ENCODE measurements at regions of chr14 and their contacts with region 1.

Region 1: DNA sequence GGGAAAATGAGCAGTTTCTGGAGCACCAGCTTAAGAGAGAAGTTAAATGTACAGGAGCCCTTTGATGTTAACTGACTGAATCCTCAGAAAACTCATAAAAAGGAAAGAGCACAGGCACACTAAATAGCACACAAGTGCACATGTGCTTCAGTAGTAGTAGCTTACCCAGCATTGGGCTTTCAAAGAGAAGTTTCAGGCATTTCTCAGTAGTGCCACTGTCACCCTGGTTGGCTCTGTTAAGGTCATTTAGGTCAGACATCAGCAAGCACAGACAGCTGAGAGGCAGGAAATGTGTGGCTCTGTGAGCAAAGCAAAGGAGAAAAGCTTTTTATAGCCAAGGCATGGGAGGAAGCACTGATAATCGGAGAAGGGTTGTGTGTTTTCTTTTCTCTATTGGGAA is 96.3 kb upstream of the HIF1A start:
- DNase-seq: no peak
- H3K4me3 ChIP-seq: no peak overlapping the region
- H3K4me3 Mint-ChIP-seq: no peak overlapping the region
- H3K27ac ChIP-seq: no peak overlapping the region
- H3K27ac Mint-ChIP-seq: peak overlapping the region in 5 of 7 donors; percentile 53 to 89 (median 84)
- H3K4me1 ChIP-seq: peaks cover 43 to 57% of the 10 kb centered on the region in 2 donors
- H3K4me1 Mint-ChIP-seq: peaks cover 51% of the 10 kb centered on the region
- H3K27me3 ChIP-seq: no peaks in the 10 kb centered on the region
- H3K27me3 Mint-ChIP-seq: peaks cover 0 to 2% (median 0%) of the 10 kb centered on the region in 3 donors
- CTCF ChIP-seq: no peak

Region 2: DNA sequence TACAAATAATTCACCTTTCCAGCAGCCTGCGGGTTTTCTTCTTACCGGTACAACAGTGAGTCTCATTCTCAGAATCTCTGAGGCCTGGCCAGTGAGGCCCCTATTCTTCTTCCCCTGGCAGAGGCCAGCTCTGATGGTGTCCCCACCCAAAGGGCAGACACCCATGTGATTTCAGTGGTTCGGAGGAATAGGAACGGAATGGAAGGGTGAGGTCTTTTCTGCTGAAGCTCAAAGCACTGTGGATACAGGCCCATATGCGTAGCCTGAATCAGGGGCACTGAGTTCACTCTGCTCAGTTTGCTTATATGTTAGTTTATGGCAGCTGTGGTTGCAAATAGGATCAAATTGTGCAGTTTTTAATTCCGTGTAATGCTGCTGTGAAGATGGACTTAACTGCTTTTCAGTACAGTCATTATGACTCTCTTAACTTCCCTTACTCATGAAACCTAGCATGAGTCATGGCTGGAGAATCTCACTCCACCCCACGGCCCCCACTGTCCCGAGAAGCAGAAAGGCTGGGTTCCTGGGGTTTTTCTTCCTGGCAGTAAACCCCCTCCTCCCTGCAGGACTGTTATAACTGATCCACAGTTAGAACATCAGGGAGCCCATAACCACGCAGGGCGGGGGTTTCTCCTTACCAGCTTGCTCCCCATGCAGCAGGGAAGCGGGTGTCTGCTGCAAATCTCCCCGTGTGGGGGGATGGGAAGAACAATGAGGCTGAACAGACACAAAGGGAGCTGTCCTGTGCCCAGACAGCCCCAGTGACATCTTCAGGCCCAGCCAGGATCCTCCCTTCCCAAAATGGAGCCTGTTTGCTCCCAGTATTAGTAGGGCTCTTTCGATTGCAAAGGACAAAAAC is 495.3 kb before region 1 on chr14:
- intact Hi-C with region 1: loop called in 1 of 2 experiments (anchors 10 kb)
- DNase-seq: peak; percentile 89 to 97 (median 93)
- H3K4me3 ChIP-seq: peak overlapping the region in 2 of 3 experiments; percentile 9 to 49
- H3K4me3 Mint-ChIP-seq: peak overlapping the region; percentile 55 to 82
- H3K27ac ChIP-seq: peak overlapping the region; percentile 89 to 98
- H3K27ac Mint-ChIP-seq: peak overlapping the region; percentile 98 to 100 (median 99)
- H3K4me1 ChIP-seq: peaks cover 57 to 59% of the 10 kb centered on the region in 2 donors
- H3K4me1 Mint-ChIP-seq: peaks cover 58% of the 10 kb centered on the region
- H3K27me3 ChIP-seq: no peaks in the 10 kb centered on the region
- H3K27me3 Mint-ChIP-seq: no peaks in the 10 kb centered on the region
- CTCF ChIP-seq: no peak

Region 3: DNA sequence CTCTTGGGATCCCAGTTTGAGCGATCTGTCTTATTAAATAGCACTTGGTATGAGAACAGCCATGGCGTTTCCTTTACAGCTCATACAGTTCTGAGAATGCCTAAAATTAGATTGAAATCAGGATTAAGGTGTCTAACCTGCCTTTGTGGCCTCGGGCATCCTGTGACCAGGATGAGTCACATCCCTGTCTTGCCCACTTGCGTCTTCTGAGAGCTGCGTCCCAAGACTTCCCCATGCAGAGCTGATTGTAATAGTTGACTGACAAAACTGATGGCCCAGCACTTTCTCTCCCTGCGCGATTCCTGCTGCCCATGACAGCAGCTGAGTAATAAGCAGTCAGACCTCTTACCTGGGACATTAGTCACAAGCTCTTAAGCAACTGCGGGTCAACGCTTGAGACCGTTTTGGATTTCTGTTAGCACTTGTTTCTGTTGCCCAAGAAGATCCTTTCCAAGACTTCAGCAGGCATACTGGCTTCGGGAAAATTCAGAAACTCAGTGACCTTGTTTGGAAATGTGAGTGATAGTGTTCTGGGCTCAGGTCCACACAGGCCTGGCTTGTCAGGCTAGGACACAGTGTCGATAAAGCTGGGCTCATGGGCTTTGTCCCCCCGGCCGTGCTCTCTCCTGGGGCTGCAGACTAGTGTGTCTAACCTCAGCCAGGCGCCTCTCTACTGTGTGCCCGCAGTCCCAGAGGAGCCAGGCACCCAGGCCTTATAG is 73.5 kb before region 1 on chr14:
- intact Hi-C with region 1: loop called in 1 of 2 experiments (anchors 2 kb)
- DNase-seq: peak; percentile 93 to 98 (median 94)
- H3K4me3 ChIP-seq: no peak overlapping the region
- H3K4me3 Mint-ChIP-seq: peak overlapping the region in 1 of 2 donors; percentile 36
- H3K27ac ChIP-seq: peak overlapping the region; percentile 22 to 56
- H3K27ac Mint-ChIP-seq: peak overlapping the region in 6 of 7 donors; percentile 70 to 92 (median 88)
- H3K4me1 ChIP-seq: peaks cover 12 to 15% of the 10 kb centered on the region in 2 donors
- H3K4me1 Mint-ChIP-seq: peaks cover 40% of the 10 kb centered on the region
- H3K27me3 ChIP-seq: no peaks in the 10 kb centered on the region
- H3K27me3 Mint-ChIP-seq: no peaks in the 10 kb centered on the region
- CTCF ChIP-seq: no peak

Region 4: GRCh38 chr14:61561657-61562276 is 37.2 kb before region 1 on chr14:
- intact Hi-C with region 1: loop called in 1 of 2 experiments (anchors 5 kb)
- DNase-seq: peak in 2 of 3 donors; percentile 58 to 84
- H3K4me3 ChIP-seq: no peak overlapping the region
- H3K4me3 Mint-ChIP-seq: peak overlapping the region in 1 of 2 donors; percentile 32
- H3K27ac ChIP-seq: peak overlapping the region in 1 of 2 donors; percentile 3
- H3K27ac Mint-ChIP-seq: peak overlapping the region; percentile 25 to 87 (median 74)
- H3K4me1 ChIP-seq: peaks cover 39 to 44% of the 10 kb centered on the region in 2 donors
- H3K4me1 Mint-ChIP-seq: peaks cover 54% of the 10 kb centered on the region
- H3K27me3 ChIP-seq: no peaks in the 10 kb centered on the region
- H3K27me3 Mint-ChIP-seq: peaks cover 0 to 2% (median 2%) of the 10 kb centered on the region in 3 donors
- CTCF ChIP-seq: no peak

Region 5: GRCh38 chr14:61662437-61663311 is 63.7 kb after region 1 on chr14:
- intact Hi-C with region 1: loop called in 1 of 2 experiments (anchors 2 kb)
- DNase-seq: peak; percentile 90 to 94 (median 92)
- H3K4me3 ChIP-seq: peak overlapping the region; percentile 12 to 60 (median 25)
- H3K4me3 Mint-ChIP-seq: peak overlapping the region; percentile 51 to 55
- H3K27ac ChIP-seq: peak overlapping the region; percentile 80 to 87
- H3K27ac Mint-ChIP-seq: peak overlapping the region; percentile 92 to 98 (median 96)
- H3K4me1 ChIP-seq: peaks cover 55 to 68% of the 10 kb centered on the region in 2 donors
- H3K4me1 Mint-ChIP-seq: peaks cover 61% of the 10 kb centered on the region
- H3K27me3 ChIP-seq: no peaks in the 10 kb centered on the region
- H3K27me3 Mint-ChIP-seq: no peaks in the 10 kb centered on the region
- CTCF ChIP-seq: no peak

Region 6: DNA sequence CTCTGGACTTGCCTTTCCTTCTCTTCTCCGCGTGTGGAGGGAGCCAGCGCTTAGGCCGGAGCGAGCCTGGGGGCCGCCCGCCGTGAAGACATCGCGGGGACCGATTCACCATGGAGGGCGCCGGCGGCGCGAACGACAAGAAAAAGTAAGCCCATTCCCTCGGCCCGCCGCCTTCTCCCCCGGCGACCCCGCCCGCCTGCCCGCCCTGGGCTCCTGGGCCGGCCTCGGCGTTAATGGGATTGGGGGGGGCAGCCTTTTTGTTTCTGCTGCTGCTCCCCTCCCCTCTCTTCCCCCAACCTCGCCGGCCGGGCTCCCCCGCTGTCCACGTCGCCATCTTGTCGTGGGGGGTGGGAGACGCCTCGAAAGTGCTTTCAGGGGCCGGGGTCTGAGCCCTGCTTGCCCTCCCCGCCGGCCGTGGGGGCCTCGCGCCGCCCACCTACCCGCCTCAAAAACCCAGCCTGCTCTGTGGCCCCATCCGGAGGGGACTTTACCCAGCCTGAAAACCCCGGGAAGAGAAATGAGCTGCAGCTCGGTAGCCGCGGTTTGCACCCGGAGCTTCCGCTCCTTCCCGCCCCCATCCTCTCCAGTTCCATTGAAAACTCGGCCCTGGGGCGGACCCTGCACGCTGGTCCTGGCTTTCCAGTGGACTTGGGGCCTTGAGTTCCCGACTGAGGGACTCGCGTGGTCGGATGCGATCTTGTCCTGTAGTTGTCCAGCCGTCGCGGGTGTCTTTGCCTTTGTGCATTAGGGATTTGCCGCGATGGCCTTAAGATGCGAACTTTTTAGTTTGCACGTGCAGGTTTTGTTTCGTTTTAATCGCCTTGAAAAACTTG is 96.9 kb after region 1 on chr14:
- intact Hi-C with region 1: loop called in 1 of 2 experiments (anchors 2 kb)
- DNase-seq: peak; percentile 15 to 49 (median 35)
- H3K4me3 ChIP-seq: peak overlapping the region; percentile 68 to 99 (median 89)
- H3K4me3 Mint-ChIP-seq: peak overlapping the region; percentile 95 to 97
- H3K27ac ChIP-seq: peak overlapping the region; percentile 90 to 98
- H3K27ac Mint-ChIP-seq: peak overlapping the region; percentile 94 to 98 (median 97)
- H3K4me1 ChIP-seq: peaks cover 19 to 45% of the 10 kb centered on the region in 2 donors
- H3K4me1 Mint-ChIP-seq: peaks cover 21% of the 10 kb centered on the region
- H3K27me3 ChIP-seq: no peaks in the 10 kb centered on the region
- H3K27me3 Mint-ChIP-seq: peaks cover 0 to 3% (median 1%) of the 10 kb centered on the region in 3 donors
- CTCF ChIP-seq: no peak

Region 7: GRCh38 chr14:61719344-61720293 is 120.6 kb after region 1 on chr14:
- intact Hi-C with region 1: loop called in 1 of 2 experiments (anchors 10 kb)
- DNase-seq: no peak
- H3K4me3 ChIP-seq: no peak overlapping the region
- H3K4me3 Mint-ChIP-seq: peak overlapping the region in 1 of 2 donors; percentile 47
- H3K27ac ChIP-seq: no peak overlapping the region
- H3K27ac Mint-ChIP-seq: peak overlapping the region in 3 of 7 donors; percentile 42 to 77 (median 58)
- H3K4me1 ChIP-seq: peaks cover 3 to 12% of the 10 kb centered on the region in 2 donors
- H3K4me1 Mint-ChIP-seq: peaks cover 38% of the 10 kb centered on the region
- H3K27me3 ChIP-seq: no peaks in the 10 kb centered on the region
- H3K27me3 Mint-ChIP-seq: peaks cover 0 to 1% (median 0%) of the 10 kb centered on the region in 3 donors
- CTCF ChIP-seq: no peak